Breast epithelium (tissue), 4 donors: ENCODE measurements at regions of chrX and their contacts with region 1.

Region 1: GRCh38 chrX:32116047-32116446 is 1044.2 kb upstream of the FTHL17 start:
- DNase-seq: no peak
- H3K4me3 ChIP-seq: no peak overlapping the region
- H3K27ac ChIP-seq: no peak overlapping the region
- H3K4me1 ChIP-seq: no peaks in the 10 kb centered on the region
- H3K27me3 ChIP-seq: peaks cover 0 to 11% of the 10 kb centered on the region in 2 donors
- CTCF ChIP-seq: no peak
- POLR2A ChIP-seq: no peak

Region 2: DNA sequence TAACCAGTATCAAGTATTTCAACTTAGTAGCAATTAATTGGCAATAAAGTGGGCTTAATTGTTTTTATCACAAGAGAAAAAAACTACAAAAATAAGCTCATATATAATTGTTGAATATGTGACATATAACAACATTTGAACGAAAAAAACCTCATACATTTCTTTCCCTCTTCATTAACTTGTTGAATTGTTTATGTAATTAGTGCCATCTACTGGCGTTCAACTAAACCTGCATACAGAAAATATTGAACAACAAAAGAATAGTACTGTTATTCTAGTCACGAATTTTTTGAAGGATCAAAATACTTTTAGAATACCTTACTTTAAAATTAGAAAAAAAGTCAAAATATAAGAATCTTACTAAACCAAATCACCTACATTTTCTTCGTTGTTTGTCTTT is 457.7 kb before region 1 on chrX:
- intact Hi-C with region 1: no loop called
- DNase-seq: no peak
- H3K4me3 ChIP-seq: no peak overlapping the region
- H3K27ac ChIP-seq: no peak overlapping the region
- H3K4me1 ChIP-seq: no peaks in the 10 kb centered on the region
- H3K27me3 ChIP-seq: peaks cover 0 to 7% of the 10 kb centered on the region in 2 donors
- CTCF ChIP-seq: peak in 2 of 3 donors; percentile 24 to 61
- POLR2A ChIP-seq: no peak

Region 3: DNA sequence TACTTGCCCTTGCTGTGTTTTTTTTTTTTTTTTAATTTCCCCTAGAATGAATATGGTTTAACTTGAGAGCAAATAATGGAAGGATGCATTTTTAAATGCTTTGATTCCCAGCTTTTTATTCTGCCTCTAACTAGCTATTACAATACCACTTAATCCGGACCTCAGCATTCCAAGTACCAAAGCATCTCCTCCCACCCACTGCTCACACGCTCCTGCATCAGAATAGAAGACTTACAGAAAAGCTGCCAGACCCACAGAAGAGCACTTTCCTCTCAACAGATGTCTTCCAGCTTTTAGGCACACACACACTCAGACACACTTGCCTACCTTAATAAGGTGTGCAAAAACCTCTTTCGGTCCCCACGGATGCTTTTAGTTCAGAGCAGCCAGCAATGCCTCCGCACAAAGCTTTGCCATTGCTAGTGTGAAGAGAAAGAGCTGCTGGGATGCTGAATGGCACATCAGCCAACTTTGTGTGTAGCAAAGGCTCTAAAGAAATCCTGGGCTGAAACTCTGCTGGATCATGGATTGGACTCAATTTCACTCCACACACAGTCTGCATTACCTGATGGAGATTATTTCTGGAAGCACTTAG is 39.1 kb after region 1 on chrX:
- intact Hi-C with region 1: no loop called
- DNase-seq: no peak
- H3K4me3 ChIP-seq: no peak overlapping the region
- H3K27ac ChIP-seq: no peak overlapping the region
- H3K4me1 ChIP-seq: no peaks in the 10 kb centered on the region
- H3K27me3 ChIP-seq: peaks cover 0 to 3% of the 10 kb centered on the region in 2 donors
- CTCF ChIP-seq: no peak
- POLR2A ChIP-seq: no peak

Region 4: GRCh38 chrX:32392655-32393054 is 276.6 kb after region 1 on chrX:
- intact Hi-C with region 1: loop called (anchors 5 kb)
- DNase-seq: no peak
- H3K4me3 ChIP-seq: no peak overlapping the region
- H3K27ac ChIP-seq: no peak overlapping the region
- H3K4me1 ChIP-seq: no peaks in the 10 kb centered on the region
- H3K27me3 ChIP-seq: no peaks in the 10 kb centered on the region
- CTCF ChIP-seq: no peak
- POLR2A ChIP-seq: no peak